Activated naive CD4-positive, alpha-beta T cell treated with anti-CD3 and anti-CD28 coated beads, Interleukin-2, amount 10 ng/mL, durations not matched to agents 7 days and 5 days (primary cell): ENCODE measurements at regions of chr1 and their contacts with region 1.

Region 1: DNA sequence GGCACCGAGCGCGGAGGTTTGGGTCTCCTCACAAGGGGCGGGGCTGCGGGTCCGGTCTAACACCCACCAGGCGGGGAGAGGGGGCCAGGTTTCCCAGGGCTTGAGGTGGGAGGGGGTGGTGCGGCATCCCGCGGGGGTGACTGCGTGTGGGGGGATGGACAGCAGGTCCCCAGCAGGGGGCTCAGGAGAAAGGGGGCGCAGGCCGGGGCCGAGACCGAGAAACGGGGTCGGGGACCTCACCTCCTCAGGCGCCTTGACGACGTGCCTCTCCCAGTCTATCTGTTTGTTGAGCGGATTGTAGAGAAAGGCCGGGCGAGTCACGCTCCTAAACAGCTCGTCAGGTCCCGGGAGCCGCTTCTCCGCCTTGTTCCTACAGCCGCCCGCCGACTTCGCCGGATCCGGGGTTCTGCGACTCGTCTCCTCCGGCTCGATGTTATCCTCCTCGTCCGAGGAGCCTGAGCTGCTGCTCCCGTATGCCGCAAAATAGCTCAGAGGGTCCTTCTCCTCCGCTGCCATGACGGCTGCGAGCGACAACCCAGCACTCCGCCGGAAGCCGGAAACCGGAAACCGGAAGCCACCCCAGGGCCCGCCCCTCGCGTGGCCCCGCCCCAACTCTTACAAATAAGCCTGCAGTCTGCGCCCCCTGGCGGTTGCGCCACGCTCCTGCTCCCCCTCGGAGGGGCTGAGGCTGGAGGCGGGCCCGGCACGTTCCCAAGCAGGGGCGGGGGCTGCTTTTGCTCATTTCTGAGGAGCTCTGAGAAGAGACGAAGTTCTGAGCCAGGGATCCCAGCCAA is at the start of gene C1orf52:
- DNase-seq: peak; percentile 96
- H3K4me3 Mint-ChIP-seq: peak within 1 kb of the TSS; percentile 97
- H3K27ac Mint-ChIP-seq: peak within 1 kb of the TSS; percentile 94
- H3K4me1 Mint-ChIP-seq: peaks cover 39% of the 10 kb centered on the region
- H3K27me3 Mint-ChIP-seq: no peaks in the 10 kb centered on the region

Region 2: GRCh38 chr1:85027242-85027983 is 231.9 kb before region 1 on chr1:
- CTCF ChIA-PET with region 1: interaction called, 15 read pairs
- DNase-seq: peak; percentile 40
- H3K4me3 Mint-ChIP-seq: no peak overlapping the region
- H3K27ac Mint-ChIP-seq: peak overlapping the region; percentile 78
- H3K4me1 Mint-ChIP-seq: peaks cover 13% of the 10 kb centered on the region
- H3K27me3 Mint-ChIP-seq: no peaks in the 10 kb centered on the region

Region 3: DNA sequence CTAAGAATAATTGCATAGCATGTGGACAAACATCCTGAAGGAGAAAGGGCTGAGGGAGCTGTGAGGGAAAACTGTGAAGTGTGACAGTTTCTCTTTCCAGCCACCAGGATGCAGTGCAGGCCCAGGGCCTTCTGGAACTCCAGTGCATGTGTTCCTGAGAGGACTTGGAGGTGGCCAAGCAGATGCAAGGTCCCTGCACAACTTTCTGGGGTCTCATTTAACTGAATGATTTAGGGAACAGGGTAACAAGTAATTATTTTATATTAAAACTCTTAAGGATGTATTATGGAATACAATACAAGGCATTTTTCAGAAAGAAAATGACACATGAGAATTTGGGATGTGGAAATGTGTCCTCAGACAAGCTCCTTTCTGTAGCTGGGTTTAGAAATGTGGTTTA is 149.8 kb before region 1 on chr1:
- CTCF ChIA-PET with region 1: interaction called, 79 read pairs
- DNase-seq: peak; percentile 55
- H3K4me3 Mint-ChIP-seq: no peak overlapping the region
- H3K27ac Mint-ChIP-seq: no peak overlapping the region
- H3K4me1 Mint-ChIP-seq: no peaks in the 10 kb centered on the region
- H3K27me3 Mint-ChIP-seq: peaks cover 16% of the 10 kb centered on the region

Region 4: GRCh38 chr1:85240174-85240601 is 19.1 kb before region 1 on chr1:
- CTCF ChIA-PET with region 1: interaction called, 17 read pairs
- DNase-seq: peak; percentile 28
- H3K4me3 Mint-ChIP-seq: no peak overlapping the region
- H3K27ac Mint-ChIP-seq: peak overlapping the region; percentile 68
- H3K4me1 Mint-ChIP-seq: peaks cover 21% of the 10 kb centered on the region
- H3K27me3 Mint-ChIP-seq: peaks cover 14% of the 10 kb centered on the region

Region 5: DNA sequence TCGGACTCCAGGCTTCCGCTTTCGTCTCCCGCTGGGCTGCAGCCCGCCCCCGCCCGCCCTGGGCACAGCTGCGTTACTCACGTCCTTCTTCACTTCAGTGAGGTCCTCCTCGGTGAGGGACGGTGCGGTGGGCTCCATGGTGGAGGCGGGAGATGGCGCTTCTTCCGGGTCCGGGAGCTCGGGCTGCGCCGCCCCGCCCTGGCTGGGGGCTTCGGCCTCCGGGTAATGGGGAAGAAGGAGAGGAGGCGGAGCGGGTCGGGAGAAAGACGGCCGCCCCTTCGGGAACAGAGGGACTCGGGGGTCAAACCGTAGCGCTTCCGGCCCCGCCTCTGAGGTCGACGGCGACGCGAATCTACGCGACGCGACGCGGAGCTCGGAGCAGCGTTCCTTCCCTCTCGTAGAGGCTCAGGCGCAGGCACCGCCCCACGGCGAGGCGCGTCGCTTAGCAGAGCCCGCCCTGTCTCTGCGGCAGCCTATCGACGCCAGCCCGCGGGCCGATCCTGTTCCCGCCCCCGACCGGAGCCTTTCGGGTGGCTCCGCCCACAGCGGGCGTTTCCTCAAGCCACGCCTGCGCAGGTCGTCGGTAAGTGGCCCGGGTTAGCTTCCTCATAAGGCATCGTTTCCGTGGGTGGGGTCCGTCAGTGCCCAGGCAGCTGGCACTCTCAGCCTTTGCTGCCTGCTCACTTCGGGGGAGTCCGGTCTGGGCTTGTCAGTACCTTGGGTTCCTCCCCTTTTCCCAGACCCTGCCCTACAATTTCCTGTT is 17.1 kb after region 1 on chr1 and contains the start of gene BCL10:
- CTCF ChIA-PET with region 1: interaction called, 19 read pairs
- DNase-seq: peak; percentile 98
- H3K4me3 Mint-ChIP-seq: peak within 1 kb of the TSS; percentile 81
- H3K27ac Mint-ChIP-seq: peak within 1 kb of the TSS; percentile 86
- H3K4me1 Mint-ChIP-seq: peaks cover 47% of the 10 kb centered on the region
- H3K27me3 Mint-ChIP-seq: peaks cover 20% of the 10 kb centered on the region